Activated CD4-positive, alpha-beta T cell treated with anti-CD3 and anti-CD28 coated beads for 36 hours (primary cell): ENCODE measurements at regions of chr9 and their contacts with region 1.

Region 1: DNA sequence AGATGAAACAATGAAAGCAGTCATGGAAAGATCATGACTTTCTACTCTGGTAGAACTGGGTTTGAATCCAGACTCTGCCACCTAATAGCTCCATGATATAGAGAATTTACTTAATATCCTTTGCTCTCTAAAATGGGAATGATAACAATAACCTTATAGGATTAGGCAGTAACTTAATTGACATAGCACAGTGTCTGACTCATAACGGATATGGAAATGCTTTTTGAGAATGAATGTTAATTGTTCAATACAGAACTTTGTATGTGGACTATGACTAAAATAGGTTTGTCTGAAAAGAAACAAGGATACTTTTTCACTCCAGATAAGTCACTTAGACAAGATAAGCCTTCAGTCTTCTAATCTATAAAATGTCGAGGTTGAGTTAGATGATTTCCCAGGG is 330.7 kb downstream of the PTPRD start:
- DNase-seq: no peak
- ATAC-seq: no peak
- H3K4me3 Mint-ChIP-seq: no peak overlapping the region
- H3K27ac Mint-ChIP-seq: no peak overlapping the region
- H3K4me1 Mint-ChIP-seq: no peaks in the 10 kb centered on the region
- H3K27me3 Mint-ChIP-seq: no peaks in the 10 kb centered on the region

Region 2: DNA sequence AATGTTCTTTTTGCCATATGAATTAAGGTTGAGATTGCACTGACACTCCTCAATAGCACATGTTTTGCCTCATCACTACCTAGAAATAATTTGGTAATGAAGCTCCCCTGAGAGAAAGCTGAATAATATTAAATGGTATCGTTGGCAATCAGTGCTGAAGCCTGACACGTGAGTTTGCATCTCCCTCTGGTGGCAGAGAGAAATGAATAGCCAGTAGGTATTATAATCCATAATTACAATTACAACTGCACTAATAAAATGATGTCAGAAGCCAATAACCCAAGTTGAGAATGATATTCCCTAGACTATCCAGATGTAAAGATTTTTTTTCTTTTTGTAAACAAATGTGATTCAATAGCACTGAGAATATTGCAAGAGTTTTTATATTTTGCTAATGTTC is 369.6 kb before region 1 on chr9:
- CTCF ChIA-PET with region 1: no interaction called
- POLR2A ChIA-PET with region 1: no interaction called
- intact Hi-C with region 1: no loop called
- DNase-seq: no peak
- ATAC-seq: no peak
- H3K4me3 Mint-ChIP-seq: no peak overlapping the region
- H3K27ac Mint-ChIP-seq: no peak overlapping the region
- H3K4me1 Mint-ChIP-seq: no peaks in the 10 kb centered on the region
- H3K27me3 Mint-ChIP-seq: no peaks in the 10 kb centered on the region

Region 3: DNA sequence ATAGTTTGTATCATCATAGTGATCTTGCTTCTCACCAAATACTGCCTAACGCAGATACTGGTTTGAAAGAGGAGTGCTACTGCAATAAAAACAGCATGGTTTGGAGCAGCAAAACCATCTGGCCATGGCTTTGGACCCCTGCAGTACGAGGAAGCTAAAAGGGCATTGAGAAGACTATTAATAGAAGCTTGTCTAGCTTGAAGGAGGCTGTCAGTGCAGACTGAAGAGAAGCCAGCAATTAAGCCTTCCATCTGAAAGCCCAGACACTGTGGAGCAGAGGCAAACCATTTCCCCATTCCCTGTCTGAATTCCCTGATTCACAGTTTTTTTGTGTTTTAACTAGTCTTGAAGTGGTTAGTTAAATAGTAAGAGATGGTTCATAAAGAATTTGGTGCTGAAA is 49.1 kb after region 1 on chr9:
- CTCF ChIA-PET with region 1: no interaction called
- POLR2A ChIA-PET with region 1: no interaction called
- intact Hi-C with region 1: loop called in 1 of 2 experiments (anchors 5 kb)
- DNase-seq: no peak
- ATAC-seq: no peak
- H3K4me3 Mint-ChIP-seq: no peak overlapping the region
- H3K27ac Mint-ChIP-seq: no peak overlapping the region
- H3K4me1 Mint-ChIP-seq: no peaks in the 10 kb centered on the region
- H3K27me3 Mint-ChIP-seq: no peaks in the 10 kb centered on the region

Region 4: DNA sequence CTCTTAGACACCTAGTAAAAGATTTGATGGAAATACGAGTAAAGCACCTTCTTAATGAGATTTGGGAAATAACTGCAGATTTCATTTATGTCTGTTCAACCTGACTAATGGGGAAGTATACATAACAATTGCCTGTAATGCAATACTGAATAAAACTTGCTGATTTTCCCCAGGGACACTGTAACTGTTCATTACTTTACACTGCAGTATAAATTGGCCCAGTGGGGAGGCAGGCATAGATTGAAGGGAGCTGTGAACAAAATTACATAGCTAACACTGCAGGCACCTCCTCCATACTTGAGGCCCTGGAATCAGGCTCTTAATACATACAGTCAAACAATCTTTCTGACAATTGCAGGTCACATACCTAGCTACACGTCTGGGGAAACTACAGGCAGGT is 114.5 kb after region 1 on chr9:
- CTCF ChIA-PET with region 1: no interaction called
- POLR2A ChIA-PET with region 1: no interaction called
- intact Hi-C with region 1: no loop called
- DNase-seq: no peak
- ATAC-seq: no peak
- H3K4me3 Mint-ChIP-seq: no peak overlapping the region
- H3K27ac Mint-ChIP-seq: no peak overlapping the region
- H3K4me1 Mint-ChIP-seq: no peaks in the 10 kb centered on the region
- H3K27me3 Mint-ChIP-seq: no peaks in the 10 kb centered on the region

Region 5: GRCh38 chr9:10488937-10489336 is 206.9 kb after region 1 on chr9:
- CTCF ChIA-PET with region 1: no interaction called
- POLR2A ChIA-PET with region 1: no interaction called
- intact Hi-C with region 1: no loop called
- DNase-seq: no peak
- ATAC-seq: no peak
- H3K4me3 Mint-ChIP-seq: no peak overlapping the region
- H3K27ac Mint-ChIP-seq: no peak overlapping the region
- H3K4me1 Mint-ChIP-seq: no peaks in the 10 kb centered on the region
- H3K27me3 Mint-ChIP-seq: no peaks in the 10 kb centered on the region